Calu3 (cell line): ENCODE measurements at regions of chr12 and their contacts with region 1.

Region 1: GRCh38 chr12:31966558-31967205 is 7.5 kb downstream of the RESF1 start:
- DNase-seq: no peak
- H3K4me3 Mint-ChIP-seq: peak overlapping the region; percentile 7
- H3K27ac Mint-ChIP-seq: peak overlapping the region; percentile 21
- H3K4me1 Mint-ChIP-seq: peaks cover 22% of the 10 kb centered on the region
- H3K27me3 Mint-ChIP-seq: no peaks in the 10 kb centered on the region
- CTCF ChIP-seq: no peak

Region 2: DNA sequence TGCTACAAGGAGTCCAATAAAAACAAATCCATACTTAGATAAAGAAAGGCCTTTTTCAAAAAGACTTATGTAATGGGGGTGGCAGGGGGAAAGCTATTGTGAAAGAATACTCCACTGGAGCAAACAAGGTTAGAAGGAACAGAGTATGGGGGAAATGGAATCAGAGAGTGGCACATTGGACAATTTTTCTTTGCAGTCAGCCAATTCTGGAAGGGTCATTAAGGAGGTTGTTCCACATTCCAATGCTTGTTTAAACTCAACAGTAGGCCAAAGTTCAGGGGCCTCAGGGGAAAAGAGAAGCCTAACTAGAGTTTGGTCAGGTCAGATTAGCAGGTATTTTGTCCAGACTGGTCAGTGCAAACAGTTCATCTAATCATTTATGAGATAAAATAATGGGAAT is 112.7 kb before region 1 on chr12:
- CTCF ChIA-PET with region 1: no interaction called
- intact Hi-C with region 1: loop called (anchors 5 kb)
- DNase-seq: peak; percentile 17
- H3K4me3 Mint-ChIP-seq: no peak overlapping the region
- H3K27ac Mint-ChIP-seq: peak overlapping the region; percentile 26
- H3K4me1 Mint-ChIP-seq: peaks cover 10% of the 10 kb centered on the region
- H3K27me3 Mint-ChIP-seq: no peaks in the 10 kb centered on the region
- CTCF ChIP-seq: no peak